GM10248 (cell line): ENCODE measurements at regions of chr2 and their contacts with region 1.

Region 1: DNA sequence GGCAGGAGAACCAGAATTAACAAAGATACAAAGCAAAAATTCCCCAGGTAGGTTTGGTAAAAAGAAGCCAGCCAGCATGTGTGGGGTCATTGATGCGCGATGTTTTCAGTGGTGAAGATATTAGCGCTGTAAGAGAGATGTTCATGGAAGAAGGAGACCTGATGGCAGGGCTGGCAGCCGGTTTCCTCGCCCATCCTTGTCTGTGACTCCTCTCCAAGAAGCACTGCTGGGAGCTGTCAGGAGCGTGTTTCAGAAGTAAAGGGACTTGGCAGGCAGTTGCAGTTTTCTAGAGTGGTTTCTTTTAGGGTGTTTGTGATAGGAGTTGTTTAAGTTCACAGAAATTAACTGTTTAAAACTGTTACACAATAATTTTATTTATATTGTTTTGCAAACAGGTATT is 24.6 kb downstream of the TAF1B start:
- DNase-seq: no peak
- CTCF ChIP-seq: no peak

Region 2: GRCh38 chr2:9824956-9825720 is 42.7 kb before region 1 on chr2:
- CTCF ChIA-PET with region 1: no interaction called
- POLR2A ChIA-PET with region 1: no interaction called
- DNase-seq: no peak
- CTCF ChIP-seq: no peak

Region 3: GRCh38 chr2:9836074-9836473 is 31.8 kb before region 1 on chr2:
- CTCF ChIA-PET with region 1: no interaction called
- POLR2A ChIA-PET with region 1: no interaction called
- DNase-seq: no peak
- CTCF ChIP-seq: no peak

Region 4: GRCh38 chr2:9849336-9849735 is 18.5 kb before region 1 on chr2:
- CTCF ChIA-PET with region 1: no interaction called
- POLR2A ChIA-PET with region 1: no interaction called
- DNase-seq: no peak
- CTCF ChIP-seq: no peak

Region 5: GRCh38 chr2:9885036-9885684 is 17.3 kb after region 1 on chr2:
- CTCF ChIA-PET with region 1: interaction called, 10 read pairs
- POLR2A ChIA-PET with region 1: no interaction called
- DNase-seq: no peak
- CTCF ChIP-seq: no peak